B cell (primary cell): ENCODE measurements at regions of chr6 and their contacts with region 1.

Region 1: DNA sequence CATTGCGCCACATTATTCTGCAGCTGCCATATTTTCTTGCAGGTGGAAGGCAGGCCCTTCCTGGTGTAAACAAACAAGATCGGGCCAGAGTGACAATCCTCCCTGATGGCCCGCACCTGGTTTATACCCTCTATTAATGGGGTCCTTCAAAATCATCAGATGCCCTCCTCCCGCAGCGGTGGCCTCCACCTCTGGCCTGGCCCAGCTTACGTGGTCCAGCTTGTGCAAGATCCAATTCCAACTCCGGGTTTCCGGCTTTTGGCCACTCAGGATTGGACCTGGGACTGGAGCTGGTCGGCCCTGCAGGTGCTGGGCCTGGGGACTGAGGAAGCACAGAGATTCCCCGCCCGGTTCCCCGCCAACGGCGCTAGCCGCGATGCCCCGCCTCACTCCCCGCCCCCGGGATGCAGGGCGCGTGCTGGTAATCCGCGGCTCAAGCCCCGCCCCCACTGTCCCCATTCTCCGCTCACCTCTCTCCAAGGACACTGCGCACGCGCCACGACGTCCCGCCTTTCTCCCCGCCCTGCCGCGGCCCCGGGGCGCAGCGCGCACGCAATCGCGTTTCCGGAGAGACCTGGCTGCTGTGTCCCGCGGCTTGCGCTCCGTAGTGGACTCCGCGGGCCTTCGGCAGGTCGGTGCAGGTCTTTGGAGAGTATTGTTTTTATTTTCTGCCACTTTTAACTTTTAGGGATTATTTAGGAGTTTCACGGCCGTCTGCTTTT is at the start of gene TMEM14B:
- DNase-seq: peak; percentile 99
- ATAC-seq: peak; percentile 98
- H3K4me3 ChIP-seq: peak within 1 kb of the TSS; percentile 64 to 89 (median 85)
- H3K4me3 Mint-ChIP-seq: peak within 1 kb of the TSS; percentile 95
- H3K27ac ChIP-seq: peak within 1 kb of the TSS; percentile 56 to 76
- H3K27ac Mint-ChIP-seq: peak within 1 kb of the TSS; percentile 91
- H3K4me1 ChIP-seq: peaks cover 17 to 25% of the 10 kb centered on the region in 2 donors
- H3K4me1 Mint-ChIP-seq: peaks cover 29% of the 10 kb centered on the region
- H3K27me3 ChIP-seq: no peaks in the 10 kb centered on the region
- H3K27me3 Mint-ChIP-seq: no peaks in the 10 kb centered on the region
- CTCF ChIP-seq: no peak
- total RNA-seq, gene TMEM14B: 53.0 and 58.5 TPM in 2 replicates

Region 2: GRCh38 chr6:10404107-10404798 is 343.2 kb before region 1 on chr6:
- CTCF ChIA-PET with region 1: no interaction called
- POLR2A ChIA-PET with region 1: no interaction called
- intact Hi-C with region 1: loop called (anchors 5 kb)
- DNase-seq: peak; percentile 91
- ATAC-seq: peak; percentile 87
- H3K4me3 ChIP-seq: peak overlapping the region; percentile 43 to 66 (median 59)
- H3K4me3 Mint-ChIP-seq: peak overlapping the region; percentile 81
- H3K27ac ChIP-seq: peak overlapping the region; percentile 32 to 37
- H3K27ac Mint-ChIP-seq: peak overlapping the region; percentile 56
- H3K4me1 ChIP-seq: peaks cover 14 to 15% of the 10 kb centered on the region in 2 donors
- H3K4me1 Mint-ChIP-seq: peaks cover 13% of the 10 kb centered on the region
- H3K27me3 ChIP-seq: peaks cover 0 to 64% (median 62%) of the 10 kb centered on the region in 4 experiments
- H3K27me3 Mint-ChIP-seq: peaks cover 77% of the 10 kb centered on the region
- CTCF ChIP-seq: no peak

Region 3: GRCh38 chr6:10668126-10668917 is 79.1 kb before region 1 on chr6:
- CTCF ChIA-PET with region 1: no interaction called
- POLR2A ChIA-PET with region 1: no interaction called
- intact Hi-C with region 1: no loop called
- DNase-seq: no peak
- ATAC-seq: no peak
- H3K4me3 ChIP-seq: no peak overlapping the region
- H3K4me3 Mint-ChIP-seq: no peak overlapping the region
- H3K27ac ChIP-seq: no peak overlapping the region
- H3K27ac Mint-ChIP-seq: no peak overlapping the region
- H3K4me1 ChIP-seq: no peaks in the 10 kb centered on the region
- H3K4me1 Mint-ChIP-seq: peaks cover 5% of the 10 kb centered on the region
- H3K27me3 ChIP-seq: peaks cover 0 to 22% (median 10%) of the 10 kb centered on the region in 4 experiments
- H3K27me3 Mint-ChIP-seq: peaks cover 25% of the 10 kb centered on the region
- CTCF ChIP-seq: no peak

Region 4: GRCh38 chr6:10694302-10695085 is 52.9 kb before region 1 on chr6 and contains the starts of genes C6orf52 and PAK1IP1:
- CTCF ChIA-PET with region 1: no interaction called
- POLR2A ChIA-PET with region 1: interaction called, 9 read pairs
- intact Hi-C with region 1: loop called (anchors 1 kb)
- DNase-seq: peak; percentile 98
- ATAC-seq: peak; percentile 94
- H3K4me3 ChIP-seq: peak within 1 kb of the TSS; percentile 73 to 97 (median 95)
- H3K4me3 Mint-ChIP-seq: peak within 1 kb of the TSS; percentile 97
- H3K27ac ChIP-seq: peak within 1 kb of the TSS; percentile 96 to 99
- H3K27ac Mint-ChIP-seq: peak within 1 kb of the TSS; percentile 100
- H3K4me1 ChIP-seq: peaks cover 16 to 28% of the 10 kb centered on the region in 2 donors
- H3K4me1 Mint-ChIP-seq: peaks cover 30% of the 10 kb centered on the region
- H3K27me3 ChIP-seq: no peaks in the 10 kb centered on the region
- H3K27me3 Mint-ChIP-seq: no peaks in the 10 kb centered on the region
- CTCF ChIP-seq: no peak
- total RNA-seq, gene C6orf52: 1.2 TPM in 1 of 2 replicates, not detected in the other
- total RNA-seq, gene PAK1IP1: 6.1 TPM in 2 replicates

Region 5: DNA sequence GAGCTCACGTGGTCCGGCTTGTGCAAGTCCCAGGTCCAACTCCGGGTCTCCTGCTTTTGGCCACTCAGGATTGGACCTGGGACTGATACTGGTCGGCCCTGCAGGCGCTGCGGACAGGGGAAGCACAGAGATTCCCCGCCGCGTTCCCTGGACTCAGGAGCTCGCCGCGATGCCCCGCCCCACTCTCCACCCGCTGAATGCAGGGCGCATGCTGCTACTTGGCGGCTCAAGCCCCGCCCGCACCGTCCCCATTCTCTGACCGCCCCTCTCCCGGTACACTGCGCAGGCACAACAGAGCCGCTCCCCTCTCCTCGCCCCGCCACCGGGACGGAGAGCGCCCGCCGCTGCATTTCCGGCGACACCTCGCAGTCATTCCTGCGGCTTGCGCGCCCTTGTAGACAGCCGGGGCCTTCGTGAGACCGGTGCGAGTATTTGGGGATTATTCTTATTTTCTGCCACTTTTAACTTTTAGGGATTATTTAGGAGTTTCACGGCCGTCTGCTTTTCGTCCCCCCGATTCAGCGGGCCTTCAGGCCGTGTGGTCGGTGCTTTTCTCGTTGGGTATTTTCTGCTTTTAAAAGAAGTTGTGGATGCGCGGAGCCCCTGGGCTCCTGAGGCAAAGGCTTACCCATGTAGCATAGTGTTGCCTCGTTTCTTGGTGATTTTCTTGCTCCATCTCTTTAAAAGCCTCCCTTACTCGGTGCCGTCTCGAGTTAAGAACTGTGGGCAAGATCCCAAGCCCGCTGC is 24.4 kb before region 1 on chr6 and contains the start of gene TMEM14C:
- CTCF ChIA-PET with region 1: interaction called, 3 read pairs
- POLR2A ChIA-PET with region 1: interaction called, 4 read pairs
- intact Hi-C with region 1: loop called (anchors 1 kb)
- DNase-seq: peak; percentile 82
- ATAC-seq: peak; percentile 99
- H3K4me3 ChIP-seq: peak within 1 kb of the TSS; percentile 52 to 82 (median 70)
- H3K4me3 Mint-ChIP-seq: peak within 1 kb of the TSS; percentile 98
- H3K27ac ChIP-seq: peak within 1 kb of the TSS; percentile 1 to 67
- H3K27ac Mint-ChIP-seq: peak within 1 kb of the TSS; percentile 95
- H3K4me1 ChIP-seq: peaks cover 16 to 31% of the 10 kb centered on the region in 2 donors
- H3K4me1 Mint-ChIP-seq: peaks cover 42% of the 10 kb centered on the region
- H3K27me3 ChIP-seq: no peaks in the 10 kb centered on the region
- H3K27me3 Mint-ChIP-seq: no peaks in the 10 kb centered on the region
- CTCF ChIP-seq: no peak
- total RNA-seq, gene TMEM14C: 25.0 and 31.7 TPM in 2 replicates

Region 6: GRCh38 chr6:11093589-11094410 is 346.4 kb after region 1 on chr6 and contains the start of gene SMIM13:
- CTCF ChIA-PET with region 1: no interaction called
- POLR2A ChIA-PET with region 1: no interaction called
- intact Hi-C with region 1: loop called (anchors 1 kb)
- DNase-seq: peak; percentile 96
- ATAC-seq: peak; percentile 90
- H3K4me3 ChIP-seq: peak within 1 kb of the TSS; percentile 65 to 95 (median 89)
- H3K4me3 Mint-ChIP-seq: peak within 1 kb of the TSS; percentile 97
- H3K27ac ChIP-seq: peak within 1 kb of the TSS; percentile 91 to 93
- H3K27ac Mint-ChIP-seq: peak within 1 kb of the TSS; percentile 97
- H3K4me1 ChIP-seq: peaks cover 12% of the 10 kb centered on the region in 2 donors
- H3K4me1 Mint-ChIP-seq: peaks cover 22% of the 10 kb centered on the region
- H3K27me3 ChIP-seq: no peaks in the 10 kb centered on the region
- H3K27me3 Mint-ChIP-seq: peaks cover 3% of the 10 kb centered on the region
- CTCF ChIP-seq: peak; percentile 74
- total RNA-seq, gene SMIM13: 5.5 and 7.0 TPM in 2 replicates

Region 7: DNA sequence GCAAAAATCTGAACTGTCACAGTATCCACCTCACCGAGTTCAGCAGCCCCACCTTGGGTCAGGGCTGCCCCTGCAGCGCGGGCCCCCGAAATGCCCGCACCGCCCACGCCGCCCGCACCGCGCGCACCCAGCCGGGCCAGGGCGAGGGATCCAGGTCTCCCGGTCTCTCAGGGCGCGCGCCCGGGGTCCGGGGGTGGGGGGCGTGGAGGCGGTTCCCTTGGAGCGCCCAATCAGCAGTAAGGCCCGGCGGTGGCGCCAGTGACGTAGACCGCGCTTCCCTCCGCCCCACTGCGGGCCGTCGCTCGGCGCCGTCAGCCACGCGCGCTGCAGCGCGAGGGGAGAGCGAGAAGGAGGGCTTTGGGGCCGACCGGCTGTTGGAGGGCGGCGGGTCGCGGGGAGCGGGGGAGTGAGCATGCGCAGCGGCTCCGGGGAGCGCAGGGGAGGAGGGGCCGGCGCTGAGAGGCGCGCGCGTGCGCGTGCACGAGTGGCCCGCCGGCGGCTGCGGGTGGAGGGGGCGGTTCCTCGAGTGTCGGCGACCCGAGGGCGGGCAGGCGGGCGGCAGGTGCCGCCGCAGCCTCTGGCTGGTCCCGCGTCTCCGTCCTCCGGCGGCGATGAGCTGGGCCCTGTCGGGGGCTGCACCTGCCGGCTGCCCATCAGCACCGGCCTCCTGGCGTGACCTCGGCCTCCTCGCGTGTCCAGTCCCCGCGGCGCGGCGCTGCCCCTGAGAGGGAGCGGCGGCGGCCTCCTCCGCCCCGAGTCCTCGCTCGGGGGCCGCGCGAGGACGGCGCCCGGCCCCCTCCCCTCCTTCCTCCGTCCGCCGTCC is 790.0 kb after region 1 on chr6 and contains the start of gene TMEM170B:
- CTCF ChIA-PET with region 1: no interaction called
- POLR2A ChIA-PET with region 1: no interaction called
- intact Hi-C with region 1: loop called (anchors 5 kb)
- DNase-seq: peak; percentile 99
- ATAC-seq: peak; percentile 93
- H3K4me3 ChIP-seq: peak within 1 kb of the TSS; percentile 68 to 83 (median 80)
- H3K4me3 Mint-ChIP-seq: peak within 1 kb of the TSS; percentile 87
- H3K27ac ChIP-seq: peak within 1 kb of the TSS; percentile 19 to 83
- H3K27ac Mint-ChIP-seq: peak within 1 kb of the TSS; percentile 92
- H3K4me1 ChIP-seq: peaks cover 8 to 11% of the 10 kb centered on the region in 2 donors
- H3K4me1 Mint-ChIP-seq: peaks cover 16% of the 10 kb centered on the region
- H3K27me3 ChIP-seq: no peaks in the 10 kb centered on the region
- H3K27me3 Mint-ChIP-seq: peaks cover 8% of the 10 kb centered on the region
- CTCF ChIP-seq: no peak
- total RNA-seq, gene TMEM170B: 3.2 and 3.4 TPM in 2 replicates